AG04450 (cell line): ENCODE measurements at regions of chr3 and their contacts with region 1.

Region 1: GRCh38 chr3:4712143-4712542 is 219.0 kb downstream of the ITPR1 start:
- DNase-seq: no peak
- H3K4me3 ChIP-seq: no peak overlapping the region
- H3K27ac ChIP-seq: no peak overlapping the region
- H3K27me3 ChIP-seq: no peaks in the 10 kb centered on the region
- CTCF ChIP-seq: no peak

Region 2: DNA sequence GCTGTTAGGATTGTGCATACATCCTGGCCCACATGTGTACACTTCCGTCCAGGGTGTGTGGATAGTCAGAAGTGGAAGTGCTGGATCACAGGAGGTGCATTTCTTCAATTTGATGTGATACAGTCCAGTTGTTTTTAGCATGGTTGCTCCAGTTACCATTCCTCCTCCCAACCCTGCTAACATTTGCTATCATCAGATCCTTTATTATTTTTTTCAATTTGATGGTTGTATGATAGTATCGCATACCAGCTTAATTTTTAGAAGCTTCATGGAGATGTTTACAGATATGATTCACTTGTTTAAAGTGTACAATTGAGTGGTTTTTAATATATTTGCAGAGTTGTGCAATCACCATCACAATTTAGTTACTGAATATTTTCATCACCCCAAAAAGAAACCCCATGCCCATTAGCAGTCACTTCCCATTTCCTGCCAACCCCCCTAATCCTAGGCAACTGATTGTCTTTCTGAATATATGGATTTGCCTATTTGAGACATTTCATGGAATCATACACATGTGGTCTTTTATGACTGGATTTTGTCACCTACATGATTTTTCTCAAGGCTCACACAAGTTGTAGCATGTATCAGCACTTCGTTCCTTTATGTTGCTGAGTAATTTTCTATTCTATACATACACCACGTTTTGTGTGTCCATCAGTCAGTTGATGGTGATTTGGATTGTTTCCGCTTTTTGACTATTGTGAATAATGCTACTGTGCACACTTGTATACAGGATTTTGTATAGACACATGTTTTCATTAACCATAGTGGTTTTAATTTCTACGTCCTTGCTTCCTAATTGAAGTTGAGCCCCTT is 16.1 kb before region 1 on chr3:
- CTCF ChIA-PET with region 1: interaction called, 26 read pairs
- POLR2A ChIA-PET with region 1: no interaction called
- DNase-seq: no peak
- H3K4me3 ChIP-seq: no peak overlapping the region
- H3K27ac ChIP-seq: no peak overlapping the region
- H3K27me3 ChIP-seq: no peaks in the 10 kb centered on the region
- CTCF ChIP-seq: no peak

Region 3: DNA sequence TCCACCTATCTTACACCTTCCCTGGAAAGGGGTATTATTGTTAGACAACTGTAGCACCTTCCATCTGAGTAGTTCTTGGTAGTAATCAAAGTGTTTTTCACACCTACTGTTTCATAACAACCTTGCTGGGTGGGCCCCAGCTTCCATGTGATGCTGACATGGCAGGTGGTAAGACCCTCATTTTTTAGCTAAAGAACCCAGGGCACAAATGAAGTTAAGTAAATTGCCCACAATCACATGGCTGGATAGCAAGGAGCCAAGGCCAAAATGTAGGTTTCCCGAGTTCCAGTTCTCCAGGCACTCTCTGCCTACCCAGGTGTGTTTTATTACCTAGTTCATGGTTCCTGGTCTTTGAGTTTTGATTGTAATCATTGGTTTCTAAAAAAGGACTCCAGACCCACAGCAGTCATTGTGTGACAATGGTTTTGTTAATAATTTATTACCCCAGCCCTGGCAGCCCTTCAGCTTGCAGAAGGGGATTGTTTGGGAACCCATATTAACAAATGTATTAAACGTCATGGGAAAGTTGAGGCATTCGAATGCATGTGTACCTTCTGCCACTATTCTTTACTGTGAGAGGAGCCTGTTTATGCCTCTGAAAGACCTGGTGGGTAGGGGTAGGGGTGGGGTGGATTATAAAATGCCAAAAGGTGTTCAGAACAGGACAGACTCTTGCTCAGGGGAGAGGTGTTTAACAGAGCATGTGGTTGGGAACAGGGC is 44.9 kb after region 1 on chr3:
- CTCF ChIA-PET with region 1: no interaction called
- POLR2A ChIA-PET with region 1: no interaction called
- DNase-seq: no peak
- H3K4me3 ChIP-seq: no peak overlapping the region
- H3K27ac ChIP-seq: no peak overlapping the region
- H3K27me3 ChIP-seq: peaks cover 19% of the 10 kb centered on the region
- CTCF ChIP-seq: no peak

Region 4: DNA sequence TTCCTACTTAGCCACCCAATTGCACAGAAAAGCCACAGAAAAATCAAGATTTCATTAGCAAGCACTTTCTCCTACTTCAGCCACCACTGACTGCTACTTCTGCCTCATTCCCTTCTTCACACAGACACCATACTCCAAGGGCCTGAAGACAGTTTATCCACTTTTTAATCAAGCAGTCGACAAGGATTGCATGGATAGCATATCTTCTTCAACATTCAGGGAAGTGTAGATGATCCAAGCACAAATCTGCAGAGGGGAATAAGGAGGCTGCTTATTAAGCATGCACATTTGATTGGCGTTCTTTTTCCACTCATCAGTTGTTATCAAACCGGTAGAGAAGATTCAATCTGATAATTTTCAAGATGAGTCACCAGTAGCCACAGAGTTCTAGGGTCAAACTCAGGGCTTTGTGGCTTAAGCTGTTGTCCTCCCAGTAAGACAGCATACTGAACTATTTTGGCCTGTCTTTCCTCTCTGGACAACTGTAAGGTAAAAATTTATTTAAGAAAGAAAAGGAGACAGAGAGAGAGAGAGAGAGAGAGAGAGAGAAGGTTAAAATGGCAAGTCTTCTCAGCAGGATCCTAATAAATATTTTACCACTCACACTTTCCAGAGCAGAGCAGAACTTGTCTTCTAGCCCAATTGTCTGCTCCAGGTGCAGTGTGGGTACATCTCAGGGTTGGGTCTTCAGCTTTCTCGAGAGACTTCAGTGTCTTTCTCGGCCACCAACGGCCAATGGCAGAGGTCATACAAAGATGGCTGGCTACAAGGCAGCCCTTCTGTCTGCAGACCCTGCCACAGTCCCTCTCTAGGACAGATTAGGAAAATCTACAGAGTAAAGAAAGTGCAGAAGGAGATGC is 186.5 kb after region 1 on chr3:
- CTCF ChIA-PET with region 1: interaction called, 12 read pairs
- POLR2A ChIA-PET with region 1: no interaction called
- DNase-seq: no peak
- H3K4me3 ChIP-seq: no peak overlapping the region
- H3K27ac ChIP-seq: no peak overlapping the region
- H3K27me3 ChIP-seq: no peaks in the 10 kb centered on the region
- CTCF ChIP-seq: no peak

Region 5: DNA sequence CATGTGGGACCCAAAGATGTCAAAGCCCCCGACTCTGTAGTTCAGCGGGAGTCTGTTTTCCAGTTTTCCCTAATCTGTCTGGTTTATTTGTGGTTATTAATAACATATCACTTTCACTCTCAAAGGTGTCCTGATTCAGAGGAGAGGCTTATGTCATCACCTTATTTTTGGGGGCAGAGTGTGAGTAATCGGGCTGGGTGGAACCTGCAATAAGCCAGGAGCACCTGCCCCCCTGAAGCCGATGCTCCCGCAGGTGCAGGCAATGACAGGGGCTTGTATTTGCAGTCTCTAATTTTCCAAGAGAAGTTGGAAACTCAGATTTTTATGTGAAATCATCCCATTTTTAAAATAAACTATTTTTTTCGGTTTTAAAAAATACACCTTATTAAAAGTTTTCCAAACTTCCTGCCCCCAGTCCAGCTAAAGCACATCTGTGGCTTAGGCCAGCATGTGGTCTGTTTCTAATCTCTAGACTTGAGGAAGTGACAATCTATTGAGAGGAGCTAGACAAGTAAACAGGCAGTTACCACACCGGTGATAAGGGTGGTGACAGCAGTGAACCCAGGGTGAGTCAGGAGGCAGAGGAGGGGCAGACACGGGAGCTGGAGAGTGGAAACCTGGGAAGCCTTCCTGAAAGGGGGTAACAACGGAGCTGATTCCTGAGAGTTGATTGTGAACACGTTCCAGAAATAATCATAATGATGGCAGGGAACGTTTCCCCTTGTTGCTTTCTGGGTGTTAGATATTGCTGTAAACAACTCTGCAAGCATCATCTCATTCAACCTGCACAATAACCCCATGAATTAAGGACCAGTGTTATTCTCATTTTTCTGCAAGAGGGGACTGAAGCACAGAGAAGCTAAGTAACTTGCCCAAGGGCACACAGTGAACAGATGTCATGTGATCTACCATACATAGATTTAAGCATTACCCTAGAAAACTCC is 304.3 kb after region 1 on chr3:
- CTCF ChIA-PET with region 1: interaction called, 135 read pairs
- POLR2A ChIA-PET with region 1: no interaction called
- DNase-seq: no peak
- H3K4me3 ChIP-seq: no peak overlapping the region
- H3K27ac ChIP-seq: no peak overlapping the region
- H3K27me3 ChIP-seq: no peaks in the 10 kb centered on the region
- CTCF ChIP-seq: no peak

Region 6: DNA sequence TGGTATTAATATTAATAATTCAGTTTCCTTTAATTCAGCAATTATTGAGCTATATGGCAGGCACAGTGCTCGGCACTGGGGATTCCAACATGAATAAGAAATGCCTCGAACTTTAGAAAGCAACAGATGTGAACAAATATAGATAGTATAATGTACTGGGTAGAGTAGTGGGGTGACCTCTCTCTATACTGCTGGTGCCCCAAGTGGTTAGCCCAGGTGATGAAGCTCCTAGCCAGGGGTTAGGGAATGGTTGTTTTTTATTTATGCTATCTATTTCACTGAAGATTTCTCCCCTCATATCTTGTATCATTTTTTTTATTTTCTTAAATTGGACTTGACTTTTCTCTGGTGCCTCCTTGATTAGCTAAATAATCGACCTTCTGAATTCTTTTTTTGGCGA is 329.2 kb after region 1 on chr3:
- CTCF ChIA-PET with region 1: interaction called, 11 read pairs
- POLR2A ChIA-PET with region 1: no interaction called
- DNase-seq: no peak
- H3K4me3 ChIP-seq: no peak overlapping the region
- H3K27ac ChIP-seq: no peak overlapping the region
- H3K27me3 ChIP-seq: peaks cover 4% of the 10 kb centered on the region
- CTCF ChIP-seq: no peak

Region 7: GRCh38 chr3:5063724-5064123 is 351.6 kb after region 1 on chr3:
- CTCF ChIA-PET with region 1: interaction called, 184 read pairs
- POLR2A ChIA-PET with region 1: no interaction called
- DNase-seq: no peak
- H3K4me3 ChIP-seq: no peak overlapping the region
- H3K27ac ChIP-seq: no peak overlapping the region
- H3K27me3 ChIP-seq: peaks cover 1% of the 10 kb centered on the region
- CTCF ChIP-seq: no peak